Cardiac septum (tissue), 1 donor: ENCODE measurements at regions of chr6 and their contacts with region 1.

Region 1: GRCh38 chr6:32413427-32414047 is 6.6 kb upstream of the BTNL2 start:
- DNase-seq: peak; percentile 90

Region 2: GRCh38 chr6:32488083-32488482 is 74.5 kb after region 1 on chr6:
- intact Hi-C with region 1: no loop called
- DNase-seq: no peak

Region 3: DNA sequence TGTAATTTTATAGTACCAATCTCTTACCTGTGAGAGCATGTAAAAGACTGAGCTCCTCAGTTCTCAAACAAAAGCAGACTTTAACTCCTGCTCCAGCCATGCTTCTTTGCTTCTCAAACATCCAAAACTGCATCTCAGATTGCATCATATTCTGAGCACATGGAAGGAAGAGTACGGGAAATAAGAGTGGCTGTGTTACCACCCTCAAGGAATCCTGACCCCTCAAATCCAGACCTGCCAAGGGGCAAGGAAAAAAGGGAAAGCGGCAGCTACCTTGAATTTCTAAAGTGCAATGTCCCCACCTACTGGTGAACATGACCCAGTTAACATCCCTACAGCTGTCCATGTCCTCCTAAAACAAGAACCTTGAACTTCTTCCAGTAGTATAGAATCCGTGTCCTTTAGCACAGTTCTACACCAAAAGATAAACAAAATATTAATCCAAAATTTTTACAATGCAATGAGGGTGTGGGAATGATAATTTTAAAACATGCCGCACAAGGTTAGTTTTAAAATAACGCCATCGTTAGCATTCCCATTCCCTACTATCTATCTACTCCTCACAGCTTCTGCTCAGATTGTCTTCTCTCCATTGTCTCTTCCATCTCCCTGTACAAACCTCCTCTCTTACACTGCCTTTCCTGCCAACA is 287.0 kb after region 1 on chr6:
- intact Hi-C with region 1: loop called (anchors 2 kb)
- DNase-seq: no peak

Region 4: DNA sequence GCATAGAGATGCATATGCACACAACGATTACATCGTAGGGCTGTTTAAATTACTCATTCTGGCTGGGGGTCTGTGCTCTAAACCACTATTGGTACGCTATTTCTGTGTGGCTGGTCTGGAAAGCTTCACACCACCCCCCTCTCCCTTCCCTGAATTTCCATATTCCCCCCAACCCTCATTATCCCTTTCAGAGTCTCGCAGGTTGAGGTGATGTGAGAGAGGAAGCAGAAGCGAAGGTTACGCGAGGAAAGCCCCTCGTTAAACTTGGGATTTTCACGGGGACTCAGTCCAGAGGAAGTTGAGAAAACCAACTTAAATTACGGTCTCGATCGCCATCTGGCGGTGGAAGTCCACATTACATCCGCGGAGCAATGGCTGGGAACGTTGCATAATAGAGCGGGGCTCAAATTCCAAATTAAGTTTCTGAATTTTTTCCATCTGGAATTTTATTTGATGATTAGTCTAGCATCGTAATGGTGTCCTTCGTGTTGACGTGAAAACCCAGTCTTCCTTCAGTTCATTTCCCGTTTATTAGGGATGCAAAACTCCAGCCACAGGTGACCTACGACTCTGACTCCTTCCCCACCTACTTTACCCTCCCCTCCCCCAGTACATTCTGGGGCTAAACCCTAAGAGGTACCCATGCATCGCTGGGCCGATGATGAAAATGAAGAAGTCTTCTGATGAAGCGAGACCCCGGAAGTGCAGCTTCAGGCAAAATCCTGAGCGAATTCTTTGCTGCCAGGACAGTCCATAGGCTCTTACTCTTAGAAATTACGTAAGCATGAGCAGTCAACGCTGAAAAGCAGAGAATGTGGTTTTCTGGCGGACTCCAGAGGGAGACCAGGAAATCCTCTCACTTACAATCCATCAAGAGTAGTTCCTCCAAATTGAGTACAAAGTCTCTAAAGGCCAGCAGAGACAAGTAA is 383.6 kb after region 1 on chr6:
- intact Hi-C with region 1: loop called (anchors 5 kb)
- DNase-seq: peak; percentile 83

Region 5: GRCh38 chr6:32868257-32868788 is 454.8 kb after region 1 on chr6:
- intact Hi-C with region 1: loop called (anchors 5 kb)
- DNase-seq: no peak